Activated CD4-positive, alpha-beta memory T cell treated with anti-CD3 and anti-CD28 coated beads for 36 hours (primary cell): ENCODE measurements at regions of chr20 and their contacts with region 1.

Region 1: GRCh38 chr20:50569864-50570836 is 60.0 kb downstream of the PTPN1 start:
- DNase-seq: peak; percentile 74
- H3K4me3 Mint-ChIP-seq: peak overlapping the region; percentile 24
- H3K27ac Mint-ChIP-seq: peak overlapping the region; percentile 61
- H3K4me1 Mint-ChIP-seq: peaks cover 82% of the 10 kb centered on the region
- H3K27me3 Mint-ChIP-seq: no peaks in the 10 kb centered on the region

Region 2: GRCh38 chr20:50338479-50339391 is 231.4 kb before region 1 on chr20:
- CTCF ChIA-PET with region 1: no interaction called
- POLR2A ChIA-PET with region 1: no interaction called
- intact Hi-C with region 1: loop called (anchors 1 kb)
- DNase-seq: peak; percentile 91
- H3K4me3 Mint-ChIP-seq: peak overlapping the region; percentile 63
- H3K27ac Mint-ChIP-seq: peak overlapping the region; percentile 96
- H3K4me1 Mint-ChIP-seq: peaks cover 37% of the 10 kb centered on the region
- H3K27me3 Mint-ChIP-seq: no peaks in the 10 kb centered on the region

Region 3: GRCh38 chr20:50478162-50479036 is 91.8 kb before region 1 on chr20:
- CTCF ChIA-PET with region 1: interaction called, 50 read pairs
- POLR2A ChIA-PET with region 1: interaction called, 4 read pairs
- intact Hi-C with region 1: loop called (anchors 1 kb)
- DNase-seq: peak; percentile 89
- H3K4me3 Mint-ChIP-seq: no peak overlapping the region
- H3K27ac Mint-ChIP-seq: no peak overlapping the region
- H3K4me1 Mint-ChIP-seq: peaks cover 37% of the 10 kb centered on the region
- H3K27me3 Mint-ChIP-seq: no peaks in the 10 kb centered on the region

Region 4: GRCh38 chr20:50509935-50510705 is 60.0 kb before region 1 on chr20 and contains the start of gene PTPN1:
- CTCF ChIA-PET with region 1: interaction called, 38 read pairs
- POLR2A ChIA-PET with region 1: interaction called, 6 read pairs
- intact Hi-C with region 1: loop called (anchors 1 kb)
- DNase-seq: peak; percentile 99
- H3K4me3 Mint-ChIP-seq: peak within 1 kb of the TSS; percentile 86
- H3K27ac Mint-ChIP-seq: peak within 1 kb of the TSS; percentile 87
- H3K4me1 Mint-ChIP-seq: peaks cover 39% of the 10 kb centered on the region
- H3K27me3 Mint-ChIP-seq: no peaks in the 10 kb centered on the region
- total RNA-seq, gene PTPN1: 80.6 to 83.4 TPM

Region 5: GRCh38 chr20:50546729-50547314 is 23.3 kb before region 1 on chr20:
- CTCF ChIA-PET with region 1: interaction called, 12 read pairs
- POLR2A ChIA-PET with region 1: interaction called, 56 read pairs
- intact Hi-C with region 1: loop called (anchors 1 kb)
- DNase-seq: peak; percentile 53
- H3K4me3 Mint-ChIP-seq: peak overlapping the region; percentile 73
- H3K27ac Mint-ChIP-seq: peak overlapping the region; percentile 80
- H3K4me1 Mint-ChIP-seq: peaks cover 67% of the 10 kb centered on the region
- H3K27me3 Mint-ChIP-seq: no peaks in the 10 kb centered on the region

Region 6: DNA sequence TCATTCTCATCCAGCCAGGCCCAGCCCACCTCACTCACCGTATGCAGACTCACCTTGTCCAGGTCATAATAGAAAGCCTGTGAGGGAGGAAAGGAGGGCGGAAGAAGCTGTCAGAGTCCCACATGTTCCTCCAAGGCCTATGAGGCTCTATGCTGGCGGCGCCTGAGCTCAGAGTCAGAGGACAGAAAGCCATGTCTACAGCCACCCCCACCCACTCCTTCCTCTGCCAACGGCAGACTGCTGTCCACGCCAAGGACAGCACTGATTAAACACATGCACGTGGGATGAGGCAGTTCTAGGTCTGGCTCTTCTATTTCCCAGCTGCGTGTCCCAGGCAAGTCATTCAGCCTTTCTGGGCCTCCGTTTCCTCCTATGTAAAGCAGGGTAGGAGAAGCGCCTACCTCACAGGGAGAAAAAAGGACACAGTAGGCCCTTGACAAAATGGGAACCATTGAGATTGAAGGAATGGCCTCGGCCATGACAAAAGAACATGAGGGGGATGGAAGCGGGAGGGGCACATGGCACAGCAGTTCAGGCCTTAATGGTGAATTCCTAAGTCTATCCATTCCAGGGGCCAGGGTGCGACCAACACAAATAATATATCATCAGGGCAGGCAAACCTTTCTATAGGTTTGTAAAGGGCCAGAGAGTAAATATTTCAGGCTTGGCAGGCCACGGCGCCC is 41.1 kb after region 1 on chr20:
- CTCF ChIA-PET with region 1: no interaction called
- POLR2A ChIA-PET with region 1: no interaction called
- intact Hi-C with region 1: no loop called
- DNase-seq: no peak
- H3K4me3 Mint-ChIP-seq: no peak overlapping the region
- H3K27ac Mint-ChIP-seq: no peak overlapping the region
- H3K4me1 Mint-ChIP-seq: no peaks in the 10 kb centered on the region
- H3K27me3 Mint-ChIP-seq: peaks cover 5% of the 10 kb centered on the region